ENCODE measurements at regions of chr3 and their contacts with region 1.

Region 1: DNA sequence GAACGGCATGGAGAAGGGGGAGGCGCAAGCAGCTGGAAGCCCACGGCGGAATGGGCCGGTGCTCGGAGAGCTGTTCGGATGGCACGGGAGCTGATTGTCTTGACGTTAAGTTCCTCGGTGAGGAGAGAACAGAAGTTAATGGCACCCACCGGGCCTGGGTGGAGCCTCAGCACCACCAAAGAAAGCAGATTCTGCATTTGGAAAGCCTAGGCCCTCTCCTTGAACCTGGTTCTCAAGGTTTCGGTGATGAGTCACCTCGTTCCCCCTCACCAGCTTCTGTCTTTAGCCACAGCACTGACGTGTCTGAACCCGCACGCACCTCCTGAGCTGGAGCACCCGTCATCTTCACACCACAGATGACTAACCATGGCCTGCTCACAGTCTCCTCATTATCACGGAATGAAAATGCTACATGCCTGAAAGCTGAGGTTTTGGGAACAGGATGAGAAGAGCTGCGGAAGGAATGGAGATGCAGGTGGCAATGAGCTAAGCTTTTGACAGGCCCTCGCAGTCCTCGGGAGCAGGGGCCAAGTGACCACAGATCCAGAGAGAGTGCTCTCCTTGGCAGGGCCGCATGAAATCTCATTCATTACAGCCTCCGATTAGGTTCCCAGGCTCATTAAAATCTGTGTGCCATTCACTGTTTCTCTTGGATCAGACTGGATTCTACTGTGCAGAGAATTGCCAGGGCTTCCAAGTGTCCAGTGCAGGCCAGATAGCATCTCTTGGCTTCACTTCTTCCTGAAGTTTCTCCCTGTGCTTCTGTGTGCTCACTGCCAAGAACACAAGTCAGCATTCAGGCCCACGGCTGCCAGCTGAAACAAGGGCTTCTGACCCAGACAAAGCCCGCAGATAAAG is 96.3 kb upstream of the DLG1 start:
- DNase-seq: peak; percentile 82
- H3K4me3 ChIP-seq: no peak overlapping the region
- H3K27ac ChIP-seq: peak overlapping the region; percentile 64
- H3K4me1 ChIP-seq: no peaks in the 10 kb centered on the region
- H3K27me3 ChIP-seq: no peaks in the 10 kb centered on the region
- CTCF ChIP-seq: no peak
- POLR2A ChIP-seq: no peak

Region 2: DNA sequence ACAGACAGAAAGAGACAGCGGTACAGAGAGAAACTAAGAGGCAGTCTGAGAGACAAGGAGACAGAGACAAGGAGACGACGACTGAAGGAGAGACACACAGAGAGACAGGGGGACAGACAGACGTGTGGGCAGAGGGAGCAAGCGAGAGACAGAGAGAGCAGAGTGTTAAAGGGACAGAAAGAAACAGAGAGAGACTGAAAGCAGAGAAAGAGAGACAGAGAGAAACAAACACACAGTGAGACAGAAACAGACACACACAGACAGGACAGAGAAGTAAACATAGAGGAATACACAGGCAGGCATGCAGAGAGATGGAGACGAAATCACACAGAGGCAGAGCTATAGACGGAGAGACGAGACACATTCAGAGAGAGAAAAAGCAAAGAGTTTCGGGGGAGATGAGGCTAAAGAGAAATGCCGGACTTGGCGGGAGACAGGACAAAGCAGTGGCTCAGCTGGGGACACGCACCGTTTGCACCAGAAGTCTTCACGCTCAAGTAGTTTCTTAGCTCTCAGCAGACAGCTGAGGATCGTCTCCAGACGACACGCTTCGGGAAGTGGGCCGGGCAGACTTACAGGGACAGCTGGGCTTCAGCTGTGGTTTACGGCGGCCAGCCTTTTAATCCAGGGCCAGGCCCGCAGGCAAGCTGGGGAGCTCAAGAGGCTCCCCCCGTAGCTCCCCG is 40.2 kb before region 1 on chr3:
- intact Hi-C with region 1: loop called (anchors 5 kb)
- DNase-seq: peak; percentile 21
- H3K4me3 ChIP-seq: no peak overlapping the region
- H3K27ac ChIP-seq: peak overlapping the region in 1 of 2 donors; percentile 9
- H3K4me1 ChIP-seq: no peaks in the 10 kb centered on the region
- H3K27me3 ChIP-seq: no peaks in the 10 kb centered on the region
- CTCF ChIP-seq: no peak
- POLR2A ChIP-seq: no peak

Measured in prostate gland (tissue), 2 donors.